ENCODE measurements at regions of chr6 and their contacts with region 1.

Region 1: DNA sequence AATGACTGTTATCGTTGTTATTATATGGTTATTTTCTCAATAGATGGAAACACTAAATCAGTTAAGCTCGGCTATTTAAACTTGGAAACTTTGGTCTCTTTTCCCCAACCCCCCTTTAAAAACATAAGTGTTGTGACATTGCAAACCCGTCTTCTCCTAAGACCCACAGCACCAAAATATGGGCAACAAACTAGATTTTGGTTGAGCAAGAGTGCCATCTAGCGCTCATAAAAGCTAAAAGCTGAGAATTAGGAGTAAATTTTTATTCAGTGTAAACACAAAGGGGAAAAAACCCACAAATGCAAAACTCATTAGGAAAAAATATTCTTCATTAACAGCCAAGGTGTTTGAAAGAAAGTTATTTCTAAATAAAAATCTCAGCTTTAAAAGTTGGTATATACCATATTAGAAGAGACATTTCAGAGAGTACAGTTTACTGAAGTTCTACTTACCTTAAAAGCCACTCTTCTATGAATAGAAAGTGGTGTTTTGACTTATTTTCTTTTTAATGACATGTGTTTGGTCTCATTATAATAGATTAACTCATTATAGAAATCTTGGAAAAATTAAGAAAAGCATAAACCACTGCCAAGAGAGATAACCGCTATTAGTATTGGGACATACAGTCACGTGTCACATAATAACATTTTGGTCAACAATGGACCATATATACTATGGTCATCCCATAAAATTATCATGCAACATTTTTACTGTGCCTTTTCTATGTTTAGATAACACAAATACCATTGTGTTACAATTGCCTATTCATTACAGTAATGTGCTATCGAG is 21.1 kb downstream of the SESN1 start:
- DNase-seq: peak; percentile 33
- H3K4me3 Mint-ChIP-seq: no peak overlapping the region
- H3K27ac Mint-ChIP-seq: no peak overlapping the region
- H3K4me1 Mint-ChIP-seq: peaks cover 21% of the 10 kb centered on the region
- H3K27me3 Mint-ChIP-seq: no peaks in the 10 kb centered on the region

Region 2: DNA sequence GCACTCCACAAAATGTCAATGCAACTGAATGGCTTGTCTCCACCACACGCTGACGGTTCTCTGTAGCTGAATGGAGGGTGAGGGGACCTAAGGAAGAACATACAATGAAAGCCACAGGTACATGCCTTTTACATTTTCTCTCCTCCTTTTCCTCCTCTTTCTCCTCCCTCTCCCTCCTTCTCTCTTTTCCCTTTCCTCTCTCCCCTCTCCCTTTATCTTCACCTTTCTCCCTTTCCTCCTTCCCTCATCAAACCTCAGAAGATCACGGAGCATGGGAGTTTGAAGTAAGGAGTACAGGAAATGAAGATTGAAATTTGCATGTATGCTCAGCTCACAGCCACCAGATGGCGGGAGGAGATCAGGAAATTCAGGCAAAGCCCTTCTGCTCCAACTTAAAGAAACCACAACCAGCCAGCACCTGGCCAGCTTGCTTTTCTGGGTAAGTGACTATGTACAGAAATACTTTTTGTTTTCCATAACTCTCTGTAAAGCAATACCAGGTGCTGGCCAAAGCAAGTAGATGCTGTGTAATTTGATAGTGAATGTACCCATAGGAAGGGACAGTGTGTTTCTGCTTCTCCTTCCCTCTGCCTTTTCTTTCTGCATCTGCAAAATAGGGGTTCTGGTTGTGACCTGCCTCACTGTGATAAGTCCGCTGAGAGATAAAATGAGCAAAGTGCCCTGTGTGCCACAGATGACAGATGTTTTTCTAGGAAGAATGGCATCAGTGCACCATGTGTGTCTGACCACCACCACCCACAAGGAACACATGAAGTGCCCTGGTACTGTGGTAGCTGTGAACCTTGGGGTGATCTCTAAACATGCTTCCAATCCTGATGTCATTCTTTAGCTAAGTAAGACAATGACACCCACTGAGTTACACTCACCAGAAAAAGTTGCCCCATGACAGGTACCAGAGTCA is 531.4 kb before region 1 on chr6:
- CTCF ChIA-PET with region 1: interaction called, 125 read pairs
- POLR2A ChIA-PET with region 1: no interaction called
- intact Hi-C with region 1: loop called (anchors 1 kb)
- DNase-seq: peak; percentile 79
- H3K4me3 Mint-ChIP-seq: peak overlapping the region; percentile 17
- H3K27ac Mint-ChIP-seq: no peak overlapping the region
- H3K4me1 Mint-ChIP-seq: peaks cover 7% of the 10 kb centered on the region
- H3K27me3 Mint-ChIP-seq: peaks cover 6% of the 10 kb centered on the region

Region 3: GRCh38 chr6:108558372-108559096 is 515.0 kb before region 1 on chr6:
- CTCF ChIA-PET with region 1: interaction called, 13 read pairs
- POLR2A ChIA-PET with region 1: no interaction called
- intact Hi-C with region 1: loop called (anchors 5 kb)
- DNase-seq: peak; percentile 97
- H3K4me3 Mint-ChIP-seq: peak overlapping the region; percentile 93
- H3K27ac Mint-ChIP-seq: peak overlapping the region; percentile 96
- H3K4me1 Mint-ChIP-seq: peaks cover 25% of the 10 kb centered on the region
- H3K27me3 Mint-ChIP-seq: no peaks in the 10 kb centered on the region

Region 4: GRCh38 chr6:108835218-108835850 is 238.2 kb before region 1 on chr6:
- CTCF ChIA-PET with region 1: interaction called, 27 read pairs
- POLR2A ChIA-PET with region 1: no interaction called
- intact Hi-C with region 1: loop called (anchors 1 kb)
- DNase-seq: peak; percentile 91
- H3K4me3 Mint-ChIP-seq: no peak overlapping the region
- H3K27ac Mint-ChIP-seq: no peak overlapping the region
- H3K4me1 Mint-ChIP-seq: peaks cover 13% of the 10 kb centered on the region
- H3K27me3 Mint-ChIP-seq: no peaks in the 10 kb centered on the region

Region 5: DNA sequence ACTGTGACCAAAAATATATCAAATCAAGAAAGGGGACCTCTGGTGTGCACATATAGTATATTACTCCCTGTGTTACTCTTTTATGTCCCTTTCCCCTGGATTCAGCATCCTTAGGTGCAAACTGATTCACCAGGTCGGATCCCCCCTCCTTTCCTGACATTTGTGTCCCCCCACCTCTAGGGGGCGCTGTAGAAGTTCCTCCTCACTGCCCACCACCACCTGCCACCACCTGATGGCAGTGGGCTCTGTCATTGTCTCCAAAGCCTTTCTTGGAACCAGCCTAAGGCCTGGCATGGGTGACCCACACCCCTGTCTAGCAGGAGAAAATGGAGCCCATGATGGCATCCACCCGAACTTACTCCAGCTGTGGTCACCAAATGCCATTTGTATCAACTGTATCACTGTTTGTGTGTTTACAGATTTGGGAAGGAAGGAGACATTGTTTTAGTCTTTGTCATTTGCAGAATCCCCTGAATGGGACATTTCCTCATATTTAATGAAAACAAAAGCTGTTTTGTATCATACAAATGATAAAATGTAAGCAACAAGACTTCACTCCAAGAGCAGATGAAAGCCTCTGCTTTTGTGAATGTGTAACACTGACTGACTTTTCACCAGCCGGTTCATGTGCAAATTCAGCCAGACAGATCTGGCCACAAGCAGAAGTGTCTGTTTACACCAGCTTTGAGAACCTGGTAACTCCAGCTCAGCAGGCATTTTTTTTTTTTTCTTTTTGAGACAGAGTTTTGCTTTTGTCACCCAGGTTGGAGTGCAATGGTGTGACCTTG is 159.1 kb before region 1 on chr6:
- CTCF ChIA-PET with region 1: interaction called, 39 read pairs
- POLR2A ChIA-PET with region 1: no interaction called
- intact Hi-C with region 1: loop called (anchors 1 kb)
- DNase-seq: peak; percentile 66
- H3K4me3 Mint-ChIP-seq: no peak overlapping the region
- H3K27ac Mint-ChIP-seq: no peak overlapping the region
- H3K4me1 Mint-ChIP-seq: no peaks in the 10 kb centered on the region
- H3K27me3 Mint-ChIP-seq: no peaks in the 10 kb centered on the region

Region 6: GRCh38 chr6:108947114-108947854 is 126.3 kb before region 1 on chr6:
- CTCF ChIA-PET with region 1: interaction called, 9 read pairs
- POLR2A ChIA-PET with region 1: no interaction called
- intact Hi-C with region 1: loop called (anchors 10 kb)
- DNase-seq: no peak
- H3K4me3 Mint-ChIP-seq: no peak overlapping the region
- H3K27ac Mint-ChIP-seq: no peak overlapping the region
- H3K4me1 Mint-ChIP-seq: peaks cover 34% of the 10 kb centered on the region
- H3K27me3 Mint-ChIP-seq: no peaks in the 10 kb centered on the region

Region 7: GRCh38 chr6:109083657-109084056 is 10.1 kb after region 1 on chr6:
- CTCF ChIA-PET with region 1: interaction called, 11 read pairs
- POLR2A ChIA-PET with region 1: no interaction called
- intact Hi-C with region 1: no loop called
- DNase-seq: no peak
- H3K4me3 Mint-ChIP-seq: no peak overlapping the region
- H3K27ac Mint-ChIP-seq: no peak overlapping the region
- H3K4me1 Mint-ChIP-seq: peaks cover 5% of the 10 kb centered on the region
- H3K27me3 Mint-ChIP-seq: no peaks in the 10 kb centered on the region